Heart left ventricle (tissue), 16 donors: ENCODE measurements at regions of chr3 and their contacts with region 1.

Region 1: DNA sequence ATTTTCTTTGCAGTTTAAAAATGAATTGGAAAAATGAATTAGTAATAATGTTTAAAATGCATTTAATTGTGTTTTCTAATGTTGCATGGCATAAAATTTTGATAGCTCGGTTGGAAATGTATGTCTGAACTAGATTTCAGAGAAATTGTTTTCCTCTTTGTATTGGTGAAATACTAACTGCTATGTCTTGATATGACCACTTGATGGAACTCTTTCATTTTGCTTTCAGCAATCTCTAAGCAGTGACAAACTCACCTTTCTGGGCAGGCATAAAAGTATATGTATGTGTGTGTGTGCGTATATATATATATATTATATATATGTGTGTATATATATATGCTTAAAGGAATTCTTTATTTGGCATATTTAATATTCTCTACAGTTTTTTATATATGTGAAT is 239.3 kb upstream of the ZNF717 start:
- DNase-seq: no peak
- ATAC-seq: no peak
- H3K4me3 ChIP-seq: no peak overlapping the region
- H3K27ac ChIP-seq: no peak overlapping the region
- H3K4me1 ChIP-seq: no peaks in the 10 kb centered on the region
- H3K27me3 ChIP-seq: no peaks in the 10 kb centered on the region
- CTCF ChIP-seq: peak in 9 of 12 donors; percentile 17 to 39 (median 25)
- POLR2A ChIP-seq: no peak

Region 2: GRCh38 chr3:76134166-76134565 is 109.5 kb after region 1 on chr3:
- intact Hi-C with region 1: no loop called
- DNase-seq: no peak
- ATAC-seq: no peak
- H3K4me3 ChIP-seq: no peak overlapping the region
- H3K27ac ChIP-seq: no peak overlapping the region
- H3K4me1 ChIP-seq: no peaks in the 10 kb centered on the region
- H3K27me3 ChIP-seq: no peaks in the 10 kb centered on the region
- CTCF ChIP-seq: no peak
- POLR2A ChIP-seq: no peak

Region 3: DNA sequence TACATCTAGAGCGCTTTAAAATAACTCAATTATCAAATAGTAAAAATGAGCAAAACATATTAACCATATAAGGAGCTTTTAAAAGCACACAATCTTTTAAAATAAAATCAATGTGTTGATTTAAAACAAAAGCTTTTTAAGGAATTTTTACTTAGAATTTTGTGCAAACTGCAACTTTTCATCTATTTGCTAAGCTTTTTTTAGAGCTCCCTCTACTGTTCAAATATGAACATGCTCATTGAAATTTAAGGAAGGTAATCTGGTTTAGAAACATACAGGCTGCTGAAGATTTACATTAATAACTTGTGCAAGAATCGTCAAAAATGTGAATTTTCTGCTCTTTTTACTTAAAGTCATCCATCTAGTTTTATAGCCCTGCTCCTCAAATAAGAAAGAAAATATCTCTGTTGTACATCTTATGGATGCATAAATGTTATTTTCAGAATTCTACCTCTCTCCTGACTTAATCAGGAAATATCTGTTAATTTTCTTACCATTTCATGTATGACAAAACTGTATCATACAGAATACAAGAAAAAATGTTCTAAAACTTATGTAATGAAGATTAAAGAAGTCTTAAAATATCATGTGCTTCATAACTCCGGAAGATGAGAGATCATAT is 545.9 kb after region 1 on chr3:
- intact Hi-C with region 1: loop called in 1 of 10 experiments (anchors 10 kb)
- DNase-seq: no peak
- ATAC-seq: no peak
- H3K4me3 ChIP-seq: no peak overlapping the region
- H3K27ac ChIP-seq: no peak overlapping the region
- H3K4me1 ChIP-seq: peaks cover 0 to 6% (median 0%) of the 10 kb centered on the region in 12 donors
- H3K27me3 ChIP-seq: no peaks in the 10 kb centered on the region
- CTCF ChIP-seq: peak; percentile 36 to 71 (median 50)
- POLR2A ChIP-seq: no peak

Region 4: GRCh38 chr3:76585794-76586392 is 561.3 kb after region 1 on chr3:
- intact Hi-C with region 1: loop called in 3 of 10 experiments (anchors 10 kb)
- DNase-seq: no peak
- ATAC-seq: no peak
- H3K4me3 ChIP-seq: no peak overlapping the region
- H3K27ac ChIP-seq: no peak overlapping the region
- H3K4me1 ChIP-seq: peaks cover 0 to 10% (median 0%) of the 10 kb centered on the region in 12 donors
- H3K27me3 ChIP-seq: no peaks in the 10 kb centered on the region
- CTCF ChIP-seq: peak; percentile 29 to 60 (median 48)
- POLR2A ChIP-seq: no peak